HEK293 (cell line): ENCODE measurements at regions of chr10 and their contacts with region 1.

Region 1: DNA sequence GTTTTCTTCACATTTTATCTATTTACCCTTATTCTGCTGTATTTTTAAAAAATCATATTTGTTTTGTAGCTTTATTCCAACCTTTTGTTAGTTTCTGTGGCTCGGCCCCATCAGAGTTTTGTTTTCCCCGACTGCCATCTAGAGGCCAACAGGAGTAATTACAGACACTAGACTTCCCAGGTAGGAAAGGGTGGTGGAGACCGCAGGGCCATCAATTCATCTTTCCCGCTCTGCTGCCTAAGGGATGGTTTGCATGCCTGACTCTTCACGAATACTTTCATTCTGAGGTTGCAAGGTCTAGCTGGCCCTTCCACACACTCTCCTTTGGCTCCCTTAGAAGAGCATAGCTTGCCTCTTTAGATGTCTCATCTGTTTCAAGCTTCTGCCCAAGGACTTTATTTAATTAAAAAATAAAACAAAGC is 38.3 kb downstream of the LYZL2 start:
- H3K4me3 ChIP-seq: no peak overlapping the region
- H3K27ac ChIP-seq: no peak overlapping the region
- H3K4me1 ChIP-seq: no peaks in the 10 kb centered on the region
- CTCF ChIP-seq: 0 out of 2 replicates have a peak, but pooled peaks have one; percentile 17

Region 2: DNA sequence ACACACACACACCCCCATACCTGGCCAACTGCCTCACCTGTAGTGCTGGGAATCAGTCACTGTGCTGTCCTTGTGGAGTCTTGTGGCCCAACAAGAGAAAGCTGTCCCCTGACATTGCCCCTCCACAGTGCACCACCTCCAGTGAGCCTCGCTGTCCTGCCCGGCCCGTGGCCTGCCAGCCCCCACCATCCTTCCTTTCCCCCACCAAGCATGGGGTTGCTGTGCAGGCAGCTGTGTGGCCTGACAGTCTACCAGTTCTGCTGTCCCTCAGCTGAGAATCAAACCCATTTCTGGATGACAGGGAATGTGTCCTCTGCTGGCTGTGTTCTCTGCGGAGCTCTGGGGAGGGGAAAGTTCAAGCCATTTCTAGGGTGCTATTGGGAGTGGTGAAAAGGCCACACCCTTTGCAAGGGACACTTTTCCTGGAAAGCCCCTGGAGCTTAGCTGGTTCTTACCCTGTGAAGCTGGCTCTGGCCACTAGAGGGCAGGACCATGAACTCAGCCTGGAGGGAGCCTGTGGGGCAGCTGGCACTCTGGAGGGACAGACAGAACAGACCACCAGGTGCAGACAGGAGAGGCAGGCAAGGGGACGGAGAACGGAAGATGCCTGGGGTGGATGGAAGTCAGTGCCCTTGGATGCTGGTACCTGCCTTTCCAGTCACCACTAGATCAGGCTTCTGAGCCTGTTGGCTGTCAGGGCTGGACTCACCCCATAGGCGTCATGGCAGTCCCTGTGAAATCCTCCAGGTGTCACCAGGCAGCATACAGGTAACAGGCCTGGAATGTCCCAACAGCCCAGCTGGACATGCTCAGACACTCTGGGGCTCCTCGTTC is 231.7 kb before region 1 on chr10:
- CTCF ChIA-PET with region 1: interaction called, 15 read pairs
- POLR2A ChIA-PET with region 1: no interaction called
- H3K4me3 ChIP-seq: no peak overlapping the region
- H3K27ac ChIP-seq: no peak overlapping the region
- H3K4me1 ChIP-seq: no peaks in the 10 kb centered on the region
- CTCF ChIP-seq: peak; percentile 60

Region 3: DNA sequence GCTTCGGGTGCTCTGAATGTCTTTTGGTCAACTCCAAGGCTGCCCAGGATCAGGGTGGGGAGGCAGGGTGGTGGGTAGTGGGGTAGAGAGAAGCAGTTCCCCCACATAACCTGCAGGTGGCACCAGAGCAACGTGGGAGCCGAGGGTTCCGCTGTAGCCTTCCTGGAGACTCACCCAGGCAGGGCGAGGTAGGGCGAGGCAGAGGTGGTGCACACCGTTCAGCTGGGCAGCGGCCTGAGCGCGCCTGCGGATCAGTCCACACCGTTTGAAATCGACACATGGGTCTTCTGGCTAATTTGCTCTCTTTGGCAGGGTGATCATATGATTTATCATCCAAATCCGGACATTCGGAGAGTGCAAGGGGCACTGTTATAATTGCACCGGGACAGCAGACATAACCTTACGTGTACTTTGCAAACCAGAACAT is 198.7 kb before region 1 on chr10:
- CTCF ChIA-PET with region 1: interaction called, 111 read pairs
- POLR2A ChIA-PET with region 1: no interaction called
- H3K4me3 ChIP-seq: no peak overlapping the region
- H3K27ac ChIP-seq: no peak overlapping the region
- H3K4me1 ChIP-seq: no peaks in the 10 kb centered on the region
- CTCF ChIP-seq: peak; percentile 86

Region 4: GRCh38 chr10:30433730-30434272 is 157.5 kb before region 1 on chr10 and contains the start of gene MAP3K8:
- CTCF ChIA-PET with region 1: interaction called, 12 read pairs
- POLR2A ChIA-PET with region 1: interaction called, 4 read pairs
- H3K4me3 ChIP-seq: peak within 1 kb of the TSS; percentile 67
- H3K27ac ChIP-seq: peak within 1 kb of the TSS; percentile 86
- H3K4me1 ChIP-seq: peaks cover 36% of the 10 kb centered on the region
- CTCF ChIP-seq: no peak

Region 5: DNA sequence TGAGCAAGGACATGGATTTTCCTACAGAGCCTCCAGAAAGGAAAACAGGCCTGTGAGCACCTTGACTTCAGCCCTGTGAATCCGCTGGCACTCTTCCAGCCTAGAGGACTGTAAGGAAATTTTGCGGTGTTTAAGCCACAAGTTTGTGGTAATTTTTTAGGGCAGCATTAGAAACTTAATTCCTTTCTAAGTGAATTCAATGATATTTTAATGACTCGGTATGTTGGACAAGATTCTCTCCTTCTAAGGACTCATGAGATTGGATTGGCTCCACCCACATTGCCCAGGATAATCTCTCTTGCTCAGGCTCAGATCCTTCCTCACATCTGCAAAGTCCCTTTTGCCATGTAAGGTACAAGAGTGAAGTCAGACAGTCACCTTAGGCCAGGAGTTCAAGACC is 33.8 kb after region 1 on chr10:
- CTCF ChIA-PET with region 1: no interaction called
- POLR2A ChIA-PET with region 1: no interaction called
- H3K4me3 ChIP-seq: no peak overlapping the region
- H3K27ac ChIP-seq: no peak overlapping the region
- H3K4me1 ChIP-seq: no peaks in the 10 kb centered on the region
- CTCF ChIP-seq: no peak